Left ventricle myocardium inferior (tissue), 1 donor: ENCODE measurements at regions of chr3 and their contacts with region 1.

Region 1: DNA sequence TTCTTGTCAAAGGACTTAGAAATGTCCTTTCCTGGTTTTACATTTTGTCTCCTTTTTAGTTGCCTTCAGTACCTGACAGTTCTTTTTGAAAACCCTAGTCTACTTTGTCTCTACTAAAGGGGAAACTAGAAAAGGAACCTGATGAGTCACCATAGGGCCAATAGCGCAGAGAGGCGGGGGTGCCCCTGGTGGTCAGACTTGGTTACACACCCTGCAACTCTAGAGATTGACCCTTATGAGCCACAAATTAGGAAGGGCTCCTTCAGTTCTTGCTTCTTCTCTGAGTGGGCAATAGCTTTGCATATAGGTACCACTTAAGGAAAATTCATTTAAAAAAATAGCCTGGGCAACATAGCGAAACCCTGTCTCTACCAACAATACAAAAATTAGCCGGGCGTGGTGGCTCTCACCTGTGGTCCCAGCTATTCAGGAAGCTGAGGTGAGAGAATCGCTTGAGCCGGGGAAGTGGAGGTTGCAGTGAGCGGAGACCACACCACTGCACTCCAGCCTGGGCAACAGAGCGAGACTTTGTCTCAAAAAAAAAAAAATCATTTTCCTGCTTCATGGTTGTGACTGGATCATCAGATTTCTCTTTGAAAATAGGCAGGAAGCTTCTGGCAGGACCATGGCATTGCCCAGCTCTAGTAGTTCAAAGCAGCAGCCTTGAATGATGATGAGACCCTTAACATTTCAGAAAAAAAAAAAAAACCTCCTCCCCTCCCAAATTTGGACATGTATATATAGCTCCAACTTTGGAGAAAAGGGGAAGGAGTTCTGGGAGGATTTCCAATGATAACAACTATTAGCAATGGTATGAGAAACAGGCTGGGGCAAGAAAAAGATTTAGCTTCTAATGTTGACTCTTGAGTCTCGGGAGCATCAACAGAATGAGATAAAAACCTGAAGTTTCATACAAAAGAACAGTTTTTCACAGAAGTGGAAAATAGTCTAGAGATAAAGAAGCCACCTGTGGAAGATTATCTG is 45.2 kb upstream of the RASA2 start:
- DNase-seq: peak; percentile 71
- H3K4me3 ChIP-seq: peak overlapping the region; percentile 21
- H3K27ac ChIP-seq: peak overlapping the region; percentile 88
- H3K4me1 ChIP-seq: peaks cover 87% of the 10 kb centered on the region
- H3K27me3 ChIP-seq: no peaks in the 10 kb centered on the region
- CTCF ChIP-seq: peak; percentile 86

Region 2: DNA sequence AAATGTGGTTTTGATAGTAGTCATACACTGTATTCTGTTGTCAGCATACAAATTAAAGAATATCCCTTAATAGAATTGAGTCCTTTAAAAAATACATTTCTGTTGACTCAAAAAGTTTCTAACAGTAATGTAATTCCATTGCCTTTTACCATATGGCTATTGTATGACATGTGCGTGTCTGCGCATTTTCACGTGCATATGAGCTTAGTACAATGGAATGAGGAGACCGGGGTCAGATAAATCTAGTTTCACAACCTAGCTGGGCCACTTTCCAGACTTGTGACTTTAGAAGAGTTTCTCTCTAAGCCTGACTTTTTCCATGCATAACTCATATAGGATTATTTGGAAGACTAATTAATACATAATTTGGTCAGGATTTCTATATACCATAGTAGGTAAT is 34.6 kb before region 1 on chr3:
- intact Hi-C with region 1: loop called (anchors 5 kb)
- DNase-seq: no peak
- H3K4me3 ChIP-seq: peak overlapping the region; percentile 79
- H3K27ac ChIP-seq: peak overlapping the region; percentile 99
- H3K4me1 ChIP-seq: peaks cover 96% of the 10 kb centered on the region
- H3K27me3 ChIP-seq: no peaks in the 10 kb centered on the region
- CTCF ChIP-seq: no peak